Testis (tissue), 5 donors: ENCODE measurements at regions of chr7 and their contacts with region 1.

Region 1: DNA sequence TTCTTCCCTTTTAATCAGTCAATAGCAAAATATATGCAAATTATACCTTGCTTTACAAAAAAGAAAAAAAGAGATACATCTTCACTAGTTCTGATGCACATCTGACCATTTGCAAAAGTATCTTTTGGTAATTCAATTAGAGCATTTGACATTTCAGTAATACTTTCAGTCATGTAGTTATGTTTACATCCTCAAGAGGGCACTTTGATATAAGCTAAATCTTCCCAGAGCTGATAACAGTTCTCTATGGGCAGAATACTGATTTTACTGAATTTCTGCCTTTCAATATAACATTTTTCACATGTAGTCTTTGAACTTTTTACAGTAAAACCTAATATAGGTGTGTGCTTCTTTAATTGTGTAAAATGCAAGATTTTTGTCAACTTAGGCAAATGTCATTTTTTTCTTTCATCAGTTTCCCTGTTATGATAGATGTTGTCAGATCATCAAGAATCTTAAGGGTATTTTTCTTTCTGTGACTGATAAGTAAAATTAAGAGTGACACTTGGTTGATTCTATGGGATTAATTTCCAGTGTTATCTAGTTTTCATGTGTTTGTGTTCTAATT is 703.5 kb upstream of the SEMA3D start:
- DNase-seq: no peak
- H3K4me3 ChIP-seq: no peak overlapping the region
- H3K27ac ChIP-seq: no peak overlapping the region
- H3K4me1 ChIP-seq: no peaks in the 10 kb centered on the region
- H3K27me3 ChIP-seq: no peaks in the 10 kb centered on the region
- CTCF ChIP-seq: peak; percentile 17 to 53 (median 45)
- POLR2A ChIP-seq: no peak

Region 2: GRCh38 chr7:86904949-86905834 is 1014.9 kb after region 1 on chr7:
- intact Hi-C with region 1: loop called (anchors 10 kb)
- DNase-seq: peak; percentile 46
- H3K4me3 ChIP-seq: no peak overlapping the region
- H3K27ac ChIP-seq: no peak overlapping the region
- H3K4me1 ChIP-seq: no peaks in the 10 kb centered on the region
- H3K27me3 ChIP-seq: no peaks in the 10 kb centered on the region
- CTCF ChIP-seq: peak; percentile 30 to 53 (median 40)
- POLR2A ChIP-seq: no peak